Endothelial cell of umbilical vein (primary cell): ENCODE measurements at regions of chr16 and their contacts with region 1.

Region 1: DNA sequence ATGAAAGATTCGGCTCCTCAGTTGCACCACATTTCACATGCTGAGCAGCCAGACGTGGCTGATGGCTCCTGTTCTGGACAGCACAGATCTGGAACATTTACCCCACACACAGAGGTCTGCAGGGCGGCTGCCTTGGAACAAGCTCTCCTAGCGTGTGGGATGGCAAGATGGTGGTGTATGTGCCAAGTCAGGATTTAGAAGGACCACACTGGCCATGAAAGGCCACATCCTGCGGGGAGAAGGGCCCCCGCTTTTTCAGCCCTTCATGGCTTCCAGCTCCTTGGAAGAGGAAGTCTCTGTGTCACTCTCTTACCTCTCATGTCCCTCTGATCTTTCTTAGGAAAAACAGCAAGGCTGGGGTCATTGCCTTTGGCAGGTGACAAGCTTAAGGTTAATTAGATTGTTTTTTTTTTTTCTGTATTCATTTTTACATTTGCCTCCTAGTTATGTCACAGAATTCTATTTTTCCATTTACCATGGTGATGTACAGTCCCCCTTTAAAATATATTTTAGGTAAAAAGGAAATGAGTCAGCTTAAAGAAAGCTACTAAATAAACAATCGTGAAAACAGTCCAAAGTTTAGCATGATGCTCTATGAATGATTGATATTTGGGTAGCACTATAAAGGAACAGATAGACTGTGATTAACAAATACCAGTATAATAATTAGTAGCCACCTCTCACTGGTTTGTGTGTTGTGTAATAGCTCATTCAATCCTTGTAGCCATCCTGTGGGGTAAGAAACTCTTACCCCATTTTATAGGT is 396.6 kb downstream of the CPPED1 start:
- DNase-seq: peak; percentile 75
- H3K4me3 ChIP-seq: no peak overlapping the region
- H3K27ac ChIP-seq: peak overlapping the region; percentile 99
- H3K4me1 ChIP-seq: peaks cover 42% of the 10 kb centered on the region
- H3K27me3 ChIP-seq: no peaks in the 10 kb centered on the region
- CTCF ChIP-seq: no peak
- POLR2A ChIP-seq: peak; percentile 34

Region 2: DNA sequence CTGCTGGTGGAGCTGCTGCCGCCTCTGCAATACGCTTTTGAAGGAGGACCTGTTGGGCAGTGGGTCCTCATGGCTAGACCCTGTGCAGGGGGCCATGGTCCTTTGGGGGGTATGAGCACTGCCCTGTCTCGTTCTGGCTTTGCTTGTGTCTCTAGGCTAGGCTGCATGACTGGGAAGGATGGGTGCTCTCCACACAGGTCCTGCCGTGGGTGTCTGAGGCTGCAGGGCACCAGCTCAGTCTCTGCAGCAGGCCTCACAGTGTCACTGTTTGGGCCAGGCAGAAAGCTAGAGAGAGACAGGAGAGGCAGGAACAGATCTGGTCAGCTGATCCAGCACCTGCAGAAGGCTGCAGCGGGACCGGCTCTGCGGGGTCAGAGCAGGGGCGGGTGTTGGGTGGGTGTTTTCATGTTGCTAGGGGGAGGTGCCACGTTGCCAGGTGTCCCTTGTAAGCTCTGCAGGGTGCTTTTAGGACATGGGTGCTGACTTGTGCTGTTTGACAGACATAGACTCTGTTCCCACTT is 319.1 kb before region 1 on chr16:
- CTCF ChIA-PET with region 1: no interaction called
- POLR2A ChIA-PET with region 1: no interaction called
- dilution Hi-C with region 1: no loop called
- intact Hi-C with region 1: no loop called
- DNase-seq: no peak
- H3K4me3 ChIP-seq: no peak overlapping the region
- H3K27ac ChIP-seq: no peak overlapping the region
- H3K4me1 ChIP-seq: peaks cover 20% of the 10 kb centered on the region
- H3K27me3 ChIP-seq: no peaks in the 10 kb centered on the region
- CTCF ChIP-seq: no peak
- POLR2A ChIP-seq: no peak

Region 3: DNA sequence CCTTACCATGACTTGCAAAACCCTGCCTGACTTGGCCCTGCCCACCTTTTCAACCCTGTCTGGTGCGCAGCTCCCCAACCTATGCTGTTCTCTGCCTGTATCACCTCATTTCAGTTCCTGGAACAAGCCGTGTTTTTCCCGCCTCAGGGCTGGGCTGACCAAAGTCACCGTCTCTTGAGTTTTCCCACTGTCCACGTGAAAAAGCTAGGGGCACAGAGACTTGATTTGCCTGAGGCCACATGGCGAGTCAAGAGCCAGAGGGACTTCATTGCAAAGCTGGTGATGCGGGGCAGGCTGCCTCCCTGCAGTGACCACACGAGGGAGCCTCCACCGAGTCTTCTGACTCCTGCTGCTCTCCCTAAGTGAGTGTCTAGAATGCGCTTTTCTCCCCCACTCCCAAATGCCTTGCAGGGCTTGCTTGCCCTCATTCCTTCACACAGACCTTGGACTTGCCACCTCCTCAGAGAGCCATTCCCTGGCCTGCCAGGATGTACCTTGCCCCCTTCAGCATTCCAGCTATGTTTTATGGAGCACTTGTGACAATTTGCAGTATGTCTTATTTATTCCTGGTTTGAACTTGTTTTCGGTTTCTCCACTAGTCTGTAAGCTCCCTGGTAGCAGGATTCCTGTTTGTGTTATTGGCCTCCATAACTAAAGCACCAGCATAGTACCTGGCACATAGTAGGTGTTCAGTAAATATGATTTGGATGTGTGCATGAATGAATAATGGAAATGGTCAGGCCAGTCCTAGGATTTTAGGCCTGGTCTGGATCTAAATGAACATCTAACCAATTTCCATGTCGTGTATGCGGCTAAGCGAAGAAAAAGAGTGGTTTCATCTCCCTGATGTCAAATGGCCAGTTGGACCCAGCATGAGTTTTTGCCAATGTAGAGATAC is 178.3 kb before region 1 on chr16:
- CTCF ChIA-PET with region 1: interaction called, 12 read pairs
- POLR2A ChIA-PET with region 1: no interaction called
- dilution Hi-C with region 1: no loop called
- intact Hi-C with region 1: loop called (anchors 5 kb)
- DNase-seq: peak; percentile 67
- H3K4me3 ChIP-seq: no peak overlapping the region
- H3K27ac ChIP-seq: no peak overlapping the region
- H3K4me1 ChIP-seq: no peaks in the 10 kb centered on the region
- H3K27me3 ChIP-seq: no peaks in the 10 kb centered on the region
- CTCF ChIP-seq: peak; percentile 64 to 93
- POLR2A ChIP-seq: no peak

Region 4: DNA sequence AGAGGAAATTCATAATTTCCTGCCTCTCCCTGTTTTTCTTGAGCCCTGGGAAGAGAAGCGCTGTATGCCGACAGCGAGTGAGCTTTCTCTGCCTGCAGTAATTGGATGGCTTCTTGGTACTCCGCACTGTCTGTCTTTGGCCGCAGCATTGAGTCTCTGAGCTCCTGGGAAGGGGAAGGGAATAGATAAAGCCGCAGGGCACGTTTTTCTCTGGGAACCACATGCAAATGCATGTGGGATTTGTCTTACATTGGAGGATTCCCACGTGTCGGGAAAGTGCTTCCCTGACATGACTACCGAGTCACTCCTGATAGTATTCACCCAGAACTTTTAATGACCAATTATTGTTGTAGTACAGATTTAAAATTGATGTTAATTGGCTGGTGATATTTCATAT is 10.7 kb after region 1 on chr16:
- CTCF ChIA-PET with region 1: interaction called, 3 read pairs
- POLR2A ChIA-PET with region 1: interaction called, 4 read pairs
- dilution Hi-C with region 1: no loop called
- intact Hi-C with region 1: loop called (anchors 1 kb)
- DNase-seq: no peak
- H3K4me3 ChIP-seq: no peak overlapping the region
- H3K27ac ChIP-seq: no peak overlapping the region
- H3K4me1 ChIP-seq: peaks cover 12% of the 10 kb centered on the region
- H3K27me3 ChIP-seq: no peaks in the 10 kb centered on the region
- CTCF ChIP-seq: no peak
- POLR2A ChIP-seq: no peak

Region 5: DNA sequence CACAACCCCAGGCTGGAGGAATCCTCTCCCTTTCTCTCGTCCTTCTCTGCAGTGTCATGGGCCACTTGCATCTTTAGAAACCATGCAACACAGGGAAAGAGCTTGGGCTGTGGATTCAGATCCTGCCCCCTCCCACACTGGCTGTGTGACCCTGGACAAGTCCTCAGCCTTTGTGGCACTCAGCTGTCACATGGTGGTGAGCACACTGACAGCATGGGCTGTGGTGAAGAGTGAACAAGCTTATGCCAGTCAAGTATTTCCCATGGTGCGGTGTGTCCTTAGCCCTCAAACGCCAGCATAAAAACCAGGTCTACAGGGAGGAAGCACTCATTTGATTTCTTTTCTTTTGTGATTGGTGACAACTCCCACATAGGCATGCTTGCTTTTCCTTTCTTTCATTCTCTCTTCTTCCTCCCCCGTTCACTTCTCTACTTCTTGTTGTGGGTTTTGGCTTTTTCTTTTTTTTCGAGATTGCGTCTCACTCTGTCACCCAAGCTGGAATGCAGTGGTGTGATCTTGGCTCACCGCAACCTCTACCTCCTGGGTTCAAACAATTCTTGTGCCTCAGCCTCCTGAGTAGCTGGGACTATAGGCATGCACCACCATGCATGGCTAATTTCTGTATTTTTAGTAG is 82.4 kb after region 1 on chr16:
- CTCF ChIA-PET with region 1: no interaction called
- POLR2A ChIA-PET with region 1: no interaction called
- dilution Hi-C with region 1: no loop called
- intact Hi-C with region 1: no loop called
- DNase-seq: no peak
- H3K4me3 ChIP-seq: no peak overlapping the region
- H3K27ac ChIP-seq: no peak overlapping the region
- H3K4me1 ChIP-seq: no peaks in the 10 kb centered on the region
- H3K27me3 ChIP-seq: no peaks in the 10 kb centered on the region
- CTCF ChIP-seq: no peak
- POLR2A ChIP-seq: no peak

Region 6: DNA sequence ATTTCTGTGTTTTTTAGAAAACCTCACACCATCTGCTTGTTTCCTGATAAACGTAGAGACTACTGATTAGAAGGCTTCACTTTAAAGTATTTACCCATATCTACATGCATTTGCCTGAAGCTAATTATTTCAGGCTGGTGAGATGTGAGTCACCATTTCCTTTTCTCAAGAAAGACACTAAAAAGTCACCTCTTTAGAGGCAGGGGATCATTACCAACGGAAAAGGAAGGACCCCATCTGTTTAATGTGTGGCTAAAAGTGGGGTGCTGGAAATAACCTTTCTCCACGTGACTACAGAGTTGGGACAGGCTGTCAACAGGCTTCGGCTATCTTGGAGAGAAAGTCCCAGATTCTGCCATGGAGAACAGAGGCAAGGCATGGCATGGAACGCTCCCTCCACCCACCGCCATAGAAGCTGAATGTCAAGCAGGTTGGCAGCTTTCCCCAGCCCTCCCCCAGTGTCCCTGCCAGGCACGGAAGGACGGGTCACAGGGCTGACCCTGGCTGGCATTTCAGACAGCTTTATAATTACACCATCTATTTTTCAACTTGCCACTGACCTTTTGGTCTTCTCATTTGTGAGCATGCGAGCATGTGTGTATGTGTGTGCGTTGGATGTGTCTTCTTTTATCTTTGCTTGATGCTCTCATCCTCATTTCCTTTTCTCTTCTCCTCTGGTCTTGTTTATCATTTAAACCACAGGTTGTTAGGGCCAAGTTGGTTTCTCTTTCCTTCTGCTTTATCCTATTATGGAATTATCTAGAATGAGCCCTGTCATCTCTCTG is 239.6 kb after region 1 on chr16:
- CTCF ChIA-PET with region 1: no interaction called
- POLR2A ChIA-PET with region 1: no interaction called
- dilution Hi-C with region 1: no loop called
- intact Hi-C with region 1: loop called (anchors 1 kb)
- DNase-seq: peak; percentile 94
- H3K4me3 ChIP-seq: no peak overlapping the region
- H3K27ac ChIP-seq: peak overlapping the region; percentile 67
- H3K4me1 ChIP-seq: peaks cover 29% of the 10 kb centered on the region
- H3K27me3 ChIP-seq: no peaks in the 10 kb centered on the region
- CTCF ChIP-seq: no peak
- POLR2A ChIP-seq: no peak

Region 7: DNA sequence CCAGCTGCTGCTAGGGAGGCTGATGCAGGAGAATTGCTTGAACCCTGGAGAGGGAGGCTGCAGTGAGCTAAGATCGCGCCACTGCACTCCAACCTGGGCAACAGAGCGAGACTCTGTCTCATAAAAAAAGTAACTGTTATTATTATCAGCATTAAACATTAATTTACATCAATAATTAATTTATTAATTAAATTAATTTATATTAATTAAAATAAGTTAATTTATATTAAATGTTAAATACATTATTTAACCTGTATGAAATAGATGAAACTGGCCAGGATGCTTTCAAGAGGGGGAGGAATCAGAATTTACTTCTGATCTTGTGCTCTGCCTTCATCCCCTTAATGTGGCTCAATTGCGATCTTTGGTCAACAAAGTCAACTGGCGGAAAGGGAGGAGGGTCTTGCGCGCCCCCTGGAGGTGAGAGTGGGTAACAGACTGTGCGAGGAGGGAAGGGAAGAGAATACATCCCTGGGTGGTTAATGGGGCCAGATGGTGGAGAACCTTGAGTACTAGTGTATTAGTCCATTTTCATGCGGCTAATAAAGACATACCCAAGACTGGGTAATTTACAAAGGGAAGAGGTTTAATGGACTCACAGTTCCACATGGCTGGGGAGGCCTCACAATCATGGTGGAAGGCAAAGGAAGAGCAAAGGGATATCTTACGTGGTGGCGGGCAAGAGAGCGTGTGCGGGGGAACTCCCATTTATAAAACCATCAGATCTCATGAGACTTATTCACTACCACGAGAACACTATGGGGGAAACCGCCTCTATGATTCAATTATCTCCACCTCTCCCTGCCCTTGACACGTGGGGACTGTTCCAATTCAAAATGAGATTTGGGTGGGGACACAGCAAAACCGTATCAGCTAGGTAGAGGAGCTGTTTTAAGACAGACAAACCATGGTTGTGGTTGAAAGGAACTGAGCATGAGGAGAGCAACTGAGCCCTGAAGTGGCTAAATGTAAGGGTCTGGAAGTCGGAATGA is 412.3 kb after region 1 on chr16:
- CTCF ChIA-PET with region 1: no interaction called
- POLR2A ChIA-PET with region 1: no interaction called
- dilution Hi-C with region 1: no loop called
- intact Hi-C with region 1: loop called (anchors 5 kb)
- DNase-seq: peak; percentile 60
- H3K4me3 ChIP-seq: no peak overlapping the region
- H3K27ac ChIP-seq: no peak overlapping the region
- H3K4me1 ChIP-seq: no peaks in the 10 kb centered on the region
- H3K27me3 ChIP-seq: peaks cover 0 to 2% of the 10 kb centered on the region in 2 experiments
- CTCF ChIP-seq: peak; percentile 83 to 88
- POLR2A ChIP-seq: no peak